ENCODE measurements at regions of chr11 and their contacts with region 1.

Region 1: DNA sequence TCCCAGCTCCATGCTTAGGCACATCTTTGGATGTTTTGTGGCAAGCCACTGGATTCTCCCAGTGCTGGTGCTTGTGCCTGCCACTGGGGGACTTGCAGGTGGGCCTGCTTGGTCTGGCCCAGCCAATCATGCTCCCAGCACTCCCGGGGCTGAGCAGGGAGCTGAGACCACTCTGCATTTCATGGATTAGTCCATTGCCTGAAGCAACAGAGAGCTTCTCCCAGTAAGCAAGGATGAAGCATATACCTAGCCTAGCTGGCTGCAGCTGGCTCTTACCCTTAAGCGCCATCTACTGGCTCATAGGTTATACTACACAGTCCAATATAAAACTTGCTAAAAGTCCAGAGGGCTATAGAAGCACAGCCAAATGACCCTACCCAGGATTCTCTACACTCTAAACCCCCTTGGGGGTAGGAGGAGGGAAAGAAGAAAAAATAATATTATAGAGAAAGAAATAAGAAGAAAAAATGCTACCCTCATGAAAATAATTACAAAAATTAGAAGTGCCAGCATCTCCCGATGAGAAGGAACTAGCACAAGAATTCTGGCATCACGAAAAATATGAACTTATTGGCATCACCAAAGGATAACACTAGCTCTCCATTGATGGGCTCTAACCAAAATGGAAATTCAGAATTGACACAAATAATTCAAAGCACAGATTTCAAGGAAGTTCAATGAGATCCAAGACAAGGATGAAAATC is 275.3 kb downstream of the C11orf87 start:
- DNase-seq: peak; percentile 19 to 47
- H3K4me3 ChIP-seq: no peak overlapping the region
- H3K27ac ChIP-seq: no peak overlapping the region
- H3K4me1 ChIP-seq: no peaks in the 10 kb centered on the region
- H3K27me3 ChIP-seq: no peaks in the 10 kb centered on the region
- CTCF ChIP-seq: peak in 2 of 3 experiments; percentile 79; a peak in 3 of 4 replicates
- EP300 ChIP-seq: no peak
- POLR2A ChIP-seq: no peak
- RAD21 ChIP-seq: peak; percentile 89 to 95

Region 2: DNA sequence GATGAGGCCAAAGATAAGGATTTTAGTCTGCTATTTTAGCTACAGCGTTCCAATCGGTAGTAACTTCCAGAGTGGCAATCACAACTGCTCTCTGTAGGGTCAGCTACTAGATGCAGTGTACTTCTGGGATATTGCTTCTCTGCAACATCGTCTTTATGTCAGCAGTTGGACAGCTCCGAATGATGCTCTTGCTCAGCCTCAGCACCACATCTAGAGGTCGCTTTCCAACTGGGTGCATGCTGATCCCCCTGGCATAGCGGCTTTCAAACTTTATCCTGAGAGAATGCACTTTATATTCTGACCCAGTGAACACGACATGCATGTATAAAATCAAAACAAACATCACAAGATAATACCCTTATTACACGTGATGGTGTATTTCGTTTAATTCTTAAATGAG is 55.7 kb before region 1 on chr11:
- CTCF ChIA-PET with region 1: no interaction called
- POLR2A ChIA-PET with region 1: no interaction called
- DNase-seq: no peak
- H3K4me3 ChIP-seq: no peak overlapping the region
- H3K27ac ChIP-seq: no peak overlapping the region
- H3K4me1 ChIP-seq: no peaks in the 10 kb centered on the region
- H3K27me3 ChIP-seq: no peaks in the 10 kb centered on the region
- CTCF ChIP-seq: peak; percentile 19 to 44 (median 38); a peak in 3 of 4 replicates
- EP300 ChIP-seq: no peak
- POLR2A ChIP-seq: no peak
- RAD21 ChIP-seq: peak; percentile 23 to 54

Region 3: DNA sequence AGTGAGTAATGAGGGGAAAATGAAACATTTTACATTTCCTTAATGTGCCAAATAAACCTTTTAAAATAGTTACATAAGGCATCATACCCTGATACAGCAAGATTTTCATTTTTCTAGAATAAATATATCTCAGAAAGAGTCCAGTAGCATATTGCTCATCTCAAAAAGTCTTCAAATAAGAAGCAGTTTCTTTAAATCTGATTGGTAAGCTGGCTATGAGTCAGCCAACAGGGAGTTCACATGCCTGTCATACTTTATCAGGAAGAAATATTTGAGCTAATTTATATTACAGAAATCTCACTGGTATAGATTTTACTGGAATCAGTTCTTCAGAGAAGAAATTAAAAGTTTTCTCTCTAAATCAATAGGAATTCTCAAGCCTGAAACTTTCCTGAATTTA is 17.2 kb before region 1 on chr11:
- CTCF ChIA-PET with region 1: interaction called, 12 read pairs
- POLR2A ChIA-PET with region 1: no interaction called
- DNase-seq: no peak
- H3K4me3 ChIP-seq: no peak overlapping the region
- H3K27ac ChIP-seq: no peak overlapping the region
- H3K4me1 ChIP-seq: no peaks in the 10 kb centered on the region
- H3K27me3 ChIP-seq: no peaks in the 10 kb centered on the region
- CTCF ChIP-seq: no peak
- EP300 ChIP-seq: no peak
- POLR2A ChIP-seq: no peak
- RAD21 ChIP-seq: no peak

Measured in H1 (cell line).